Calu3 (cell line): ENCODE measurements at regions of chr7 and their contacts with region 1.

Region 1: GRCh38 chr7:114405427-114405826 is 9.2 kb upstream of the FOXP2 start:
- DNase-seq: no peak
- H3K4me3 Mint-ChIP-seq: no peak overlapping the region
- H3K27ac Mint-ChIP-seq: no peak overlapping the region
- H3K4me1 Mint-ChIP-seq: peaks cover 7% of the 10 kb centered on the region
- H3K27me3 Mint-ChIP-seq: no peaks in the 10 kb centered on the region
- CTCF ChIP-seq: peak; percentile 55

Region 2: GRCh38 chr7:114217026-114217425 is 188.4 kb before region 1 on chr7:
- CTCF ChIA-PET with region 1: no interaction called
- intact Hi-C with region 1: loop called (anchors 5 kb)
- DNase-seq: no peak
- H3K4me3 Mint-ChIP-seq: no peak overlapping the region
- H3K27ac Mint-ChIP-seq: no peak overlapping the region
- H3K4me1 Mint-ChIP-seq: no peaks in the 10 kb centered on the region
- H3K27me3 Mint-ChIP-seq: no peaks in the 10 kb centered on the region
- CTCF ChIP-seq: no peak

Region 3: DNA sequence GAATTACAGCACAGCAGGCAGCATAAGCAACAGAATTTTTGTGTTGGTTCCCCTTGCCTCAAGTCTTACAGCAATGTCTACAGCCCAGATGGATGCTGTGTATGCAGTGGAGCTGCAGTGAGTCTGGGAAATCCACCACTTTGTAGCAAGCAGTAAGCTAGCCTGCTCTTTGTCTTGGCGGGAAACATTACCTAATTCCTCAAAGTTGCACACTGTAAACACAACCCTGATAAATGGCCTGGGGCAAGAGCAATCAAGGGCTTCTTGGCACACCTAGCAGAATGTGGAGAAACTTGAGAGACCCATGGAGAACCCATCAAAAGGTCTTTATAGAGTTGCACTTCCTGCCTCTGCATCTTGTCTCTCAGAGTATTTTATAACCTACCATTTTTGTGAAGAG is 92.8 kb before region 1 on chr7:
- CTCF ChIA-PET with region 1: no interaction called
- intact Hi-C with region 1: loop called (anchors 2 kb)
- DNase-seq: no peak
- H3K4me3 Mint-ChIP-seq: no peak overlapping the region
- H3K27ac Mint-ChIP-seq: no peak overlapping the region
- H3K4me1 Mint-ChIP-seq: no peaks in the 10 kb centered on the region
- H3K27me3 Mint-ChIP-seq: no peaks in the 10 kb centered on the region
- CTCF ChIP-seq: no peak